H1 (cell line): ENCODE measurements at regions of chr17 and their contacts with region 1.

Region 1: DNA sequence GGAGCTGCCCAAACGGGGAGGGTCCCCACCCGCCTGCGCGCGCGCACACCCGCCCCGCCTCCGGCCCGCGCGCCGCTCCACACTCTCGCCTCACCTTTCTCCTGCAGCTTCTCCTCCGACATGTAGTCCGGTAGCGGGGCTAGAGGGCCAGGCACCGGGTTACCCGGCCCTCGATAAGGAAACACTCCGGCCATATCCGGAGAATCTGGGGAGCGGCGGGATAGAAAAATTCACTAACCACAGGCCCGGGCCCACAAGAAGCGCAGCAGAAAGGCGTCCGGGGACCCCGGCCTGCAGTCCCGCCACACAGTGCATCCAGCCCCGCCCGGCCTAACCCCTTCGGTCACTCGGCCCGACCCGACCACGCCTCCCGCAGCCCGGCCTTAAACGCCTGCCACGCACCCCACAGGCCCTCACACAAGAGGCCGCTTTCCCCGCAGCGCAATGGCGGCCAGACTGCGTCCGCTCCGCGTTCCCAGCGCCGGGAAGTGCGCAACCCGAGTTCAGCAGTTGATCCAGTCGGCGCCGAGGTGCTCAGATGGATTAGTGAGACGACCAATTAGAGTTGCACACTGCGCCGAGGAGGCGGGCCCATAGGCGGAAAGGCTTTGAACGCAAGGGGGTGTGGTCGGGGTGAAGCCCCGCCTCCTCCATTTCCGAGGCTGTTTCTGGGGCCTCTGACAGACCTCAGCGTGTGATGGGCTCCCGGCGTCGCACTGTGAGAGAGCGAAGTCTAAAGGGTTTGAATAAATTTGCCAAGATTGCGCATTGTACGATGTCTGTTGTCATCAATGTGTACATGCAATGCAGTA is at the start of gene PRPF8:
- DNase-seq: peak; percentile 90 to 98
- H3K4me3 ChIP-seq: peak within 1 kb of the TSS; percentile 78 to 87 (median 82)
- H3K27ac ChIP-seq: peak within 1 kb of the TSS; percentile 63; the same call in 1 of the 2 replicates
- H3K4me1 ChIP-seq: peaks cover 0 to 5% (median 3%) of the 10 kb centered on the region in 4 experiments; a peak in 3 of 7 replicates
- H3K27me3 ChIP-seq: no peaks in the 10 kb centered on the region
- CTCF ChIP-seq: no peak
- EP300 ChIP-seq: no peak
- POLR2A ChIP-seq: peak; percentile 63 to 84
- RAD21 ChIP-seq: no peak
- total RNA-seq, gene PRPF8: 328 and 329 TPM in 2 replicates

Region 2: GRCh38 chr17:1648963-1649843 is 35.4 kb before region 1 on chr17:
- CTCF ChIA-PET with region 1: interaction called, 4 read pairs
- POLR2A ChIA-PET with region 1: interaction called, 10 read pairs
- DNase-seq: peak in 1 of 2 experiments; percentile 96
- H3K4me3 ChIP-seq: peak overlapping the region; percentile 26 to 77 (median 59)
- H3K27ac ChIP-seq: no peak overlapping the region
- H3K4me1 ChIP-seq: peaks cover 0 to 33% (median 22%) of the 10 kb centered on the region in 4 experiments; a peak in 6 of 7 replicates
- H3K27me3 ChIP-seq: peaks cover 0 to 11% (median 4%) of the 10 kb centered on the region in 4 experiments; a peak in 4 of 7 replicates
- CTCF ChIP-seq: peak; percentile 79 to 98 (median 92)
- EP300 ChIP-seq: no peak; a peak in 1 of 3 replicates
- POLR2A ChIP-seq: no peak
- RAD21 ChIP-seq: peak; percentile 45 to 67; a peak in 3 of 4 replicates

Region 3: DNA sequence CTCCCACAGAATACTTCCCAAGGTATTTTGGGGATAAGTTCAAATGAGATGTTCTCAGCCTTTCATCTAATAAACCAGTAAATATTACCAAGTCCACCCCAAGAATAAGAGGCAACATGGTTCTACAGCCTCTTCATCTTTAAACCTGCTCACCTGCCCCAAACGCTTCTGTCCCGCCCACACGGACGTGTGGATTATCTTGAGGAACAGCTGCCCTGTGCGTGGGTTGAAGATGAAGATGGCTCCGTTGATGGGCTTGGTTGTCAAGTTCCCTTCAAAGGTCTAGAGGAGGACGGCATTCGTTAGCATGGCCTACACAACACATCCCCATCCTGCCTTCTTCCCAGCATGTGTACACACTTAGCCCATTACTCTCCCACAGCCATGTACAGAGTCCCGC is 26.5 kb before region 1 on chr17:
- CTCF ChIA-PET with region 1: interaction called, 5 read pairs
- POLR2A ChIA-PET with region 1: interaction called, 15 read pairs
- DNase-seq: no peak
- H3K4me3 ChIP-seq: no peak overlapping the region
- H3K27ac ChIP-seq: no peak overlapping the region
- H3K4me1 ChIP-seq: no peaks in the 10 kb centered on the region
- H3K27me3 ChIP-seq: no peaks in the 10 kb centered on the region
- CTCF ChIP-seq: no peak
- EP300 ChIP-seq: no peak
- POLR2A ChIP-seq: no peak
- RAD21 ChIP-seq: no peak

Region 4: GRCh38 chr17:1695365-1695764 is 10.8 kb after region 1 on chr17:
- CTCF ChIA-PET with region 1: no interaction called
- POLR2A ChIA-PET with region 1: no interaction called
- DNase-seq: no peak
- H3K4me3 ChIP-seq: no peak overlapping the region
- H3K27ac ChIP-seq: no peak overlapping the region
- H3K4me1 ChIP-seq: no peaks in the 10 kb centered on the region
- H3K27me3 ChIP-seq: no peaks in the 10 kb centered on the region
- CTCF ChIP-seq: no peak
- EP300 ChIP-seq: no peak
- POLR2A ChIP-seq: no peak
- RAD21 ChIP-seq: no peak